ENCODE measurements at regions of chr17 and their contacts with region 1.

Region 1: DNA sequence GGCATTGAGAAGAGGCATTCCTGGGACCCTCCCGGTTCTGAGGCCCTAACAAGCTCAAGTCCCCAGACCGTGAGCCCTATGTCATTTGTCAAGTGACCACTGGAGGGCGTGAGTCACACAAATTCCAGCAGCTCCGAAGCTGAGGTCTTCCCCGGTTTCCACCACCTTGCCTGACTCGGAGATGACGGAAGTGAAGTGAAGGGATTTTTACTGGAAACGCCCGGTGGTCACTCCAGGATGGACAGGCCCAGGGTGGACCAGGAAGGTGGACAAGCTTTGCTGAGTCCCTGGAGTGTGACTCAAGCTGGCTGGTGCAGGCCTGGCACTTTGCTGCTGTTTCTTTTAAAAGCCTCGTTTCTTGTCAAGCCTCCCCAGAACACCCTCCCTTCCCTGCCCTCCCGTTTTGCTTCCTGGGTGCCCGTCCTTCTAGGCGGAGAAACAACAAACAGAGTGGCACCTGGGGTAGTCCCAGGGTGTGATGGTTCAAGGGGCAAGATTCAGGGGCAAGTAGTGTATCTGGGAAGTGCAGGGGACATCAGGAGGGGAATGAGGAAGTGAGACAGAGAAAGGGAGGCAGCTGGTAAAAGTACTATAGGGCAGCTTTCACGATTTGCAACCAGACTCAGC is 5.3 kb upstream of the NOS2 start:
- DNase-seq: peak; percentile 62 to 91 (median 79)
- ATAC-seq: peak; percentile 69
- H3K4me3 ChIP-seq: peak overlapping the region; percentile 44 to 54
- H3K4me3 Mint-ChIP-seq: peak overlapping the region; percentile 84
- H3K27ac ChIP-seq: peak overlapping the region; percentile 24 to 56
- H3K27ac Mint-ChIP-seq: peak overlapping the region; percentile 94
- H3K4me1 ChIP-seq: peaks cover 21% of the 10 kb centered on the region
- H3K4me1 Mint-ChIP-seq: peaks cover 27% of the 10 kb centered on the region
- H3K27me3 ChIP-seq: no peaks in the 10 kb centered on the region
- H3K27me3 Mint-ChIP-seq: no peaks in the 10 kb centered on the region
- CTCF ChIP-seq: peak; percentile 69

Region 2: GRCh38 chr17:27760069-27760885 is 45.4 kb before region 1 on chr17:
- CTCF ChIA-PET with region 1: interaction called, 5 read pairs
- POLR2A ChIA-PET with region 1: no interaction called
- intact Hi-C with region 1: loop called in 1 of 2 experiments (anchors 1 kb)
- DNase-seq: peak; percentile 51 to 82 (median 67)
- ATAC-seq: peak; percentile 61
- H3K4me3 ChIP-seq: no peak overlapping the region
- H3K4me3 Mint-ChIP-seq: no peak overlapping the region
- H3K27ac ChIP-seq: no peak overlapping the region
- H3K27ac Mint-ChIP-seq: no peak overlapping the region
- H3K4me1 ChIP-seq: no peaks in the 10 kb centered on the region
- H3K4me1 Mint-ChIP-seq: no peaks in the 10 kb centered on the region
- H3K27me3 ChIP-seq: no peaks in the 10 kb centered on the region
- H3K27me3 Mint-ChIP-seq: no peaks in the 10 kb centered on the region
- CTCF ChIP-seq: peak; percentile 84

Region 3: GRCh38 chr17:27846042-27846655 is 40.5 kb after region 1 on chr17:
- CTCF ChIA-PET with region 1: interaction called, 10 read pairs
- POLR2A ChIA-PET with region 1: interaction called, 6 read pairs
- intact Hi-C with region 1: loop called in 1 of 2 experiments (anchors 5 kb)
- DNase-seq: peak in 8 of 9 experiments; percentile 8 to 85 (median 56)
- ATAC-seq: peak; percentile 80
- H3K4me3 ChIP-seq: peak overlapping the region; percentile 6 to 29
- H3K4me3 Mint-ChIP-seq: peak overlapping the region; percentile 73
- H3K27ac ChIP-seq: peak overlapping the region in 1 of 2 experiments; percentile 62
- H3K27ac Mint-ChIP-seq: peak overlapping the region; percentile 78
- H3K4me1 ChIP-seq: peaks cover 6% of the 10 kb centered on the region
- H3K4me1 Mint-ChIP-seq: peaks cover 23% of the 10 kb centered on the region
- H3K27me3 ChIP-seq: no peaks in the 10 kb centered on the region
- H3K27me3 Mint-ChIP-seq: no peaks in the 10 kb centered on the region
- CTCF ChIP-seq: no peak

Region 4: GRCh38 chr17:27879987-27880608 is 74.5 kb after region 1 on chr17:
- CTCF ChIA-PET with region 1: interaction called, 244 read pairs
- POLR2A ChIA-PET with region 1: interaction called, 14 read pairs
- intact Hi-C with region 1: loop called (anchors 1 kb)
- DNase-seq: peak; percentile 32 to 75 (median 61)
- ATAC-seq: peak; percentile 75
- H3K4me3 ChIP-seq: no peak overlapping the region
- H3K4me3 Mint-ChIP-seq: no peak overlapping the region
- H3K27ac ChIP-seq: no peak overlapping the region
- H3K27ac Mint-ChIP-seq: no peak overlapping the region
- H3K4me1 ChIP-seq: peaks cover 17% of the 10 kb centered on the region
- H3K4me1 Mint-ChIP-seq: peaks cover 19% of the 10 kb centered on the region
- H3K27me3 ChIP-seq: no peaks in the 10 kb centered on the region
- H3K27me3 Mint-ChIP-seq: no peaks in the 10 kb centered on the region
- CTCF ChIP-seq: peak; percentile 66

Region 5: DNA sequence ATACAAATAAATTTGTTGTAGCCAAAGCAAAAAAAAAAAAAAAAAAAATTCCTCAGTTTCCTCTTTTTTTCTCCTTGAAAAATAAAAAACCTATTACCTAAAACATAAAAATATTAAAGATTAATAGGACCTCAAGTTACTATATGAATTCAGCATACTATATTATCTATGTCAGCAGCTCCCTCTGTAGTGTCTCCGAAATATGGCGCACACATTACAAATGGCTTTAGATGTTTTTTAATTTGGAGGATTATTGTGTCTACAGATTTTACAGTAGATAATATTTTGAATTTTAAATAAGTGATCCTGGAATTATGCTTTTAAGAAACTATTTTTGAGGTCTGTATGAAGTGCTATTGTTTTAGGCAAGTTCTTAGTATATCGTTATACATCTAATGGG is 331.3 kb after region 1 on chr17:
- CTCF ChIA-PET with region 1: interaction called, 3 read pairs
- POLR2A ChIA-PET with region 1: no interaction called
- intact Hi-C with region 1: loop called in 1 of 2 experiments (anchors 5 kb)
- DNase-seq: no peak
- ATAC-seq: no peak
- H3K4me3 ChIP-seq: no peak overlapping the region
- H3K4me3 Mint-ChIP-seq: no peak overlapping the region
- H3K27ac ChIP-seq: no peak overlapping the region
- H3K27ac Mint-ChIP-seq: no peak overlapping the region
- H3K4me1 ChIP-seq: no peaks in the 10 kb centered on the region
- H3K4me1 Mint-ChIP-seq: no peaks in the 10 kb centered on the region
- H3K27me3 ChIP-seq: no peaks in the 10 kb centered on the region
- H3K27me3 Mint-ChIP-seq: no peaks in the 10 kb centered on the region
- CTCF ChIP-seq: no peak

Measured in CD8-positive, alpha-beta T cell (primary cell).